Transverse colon (tissue), 4 donors: ENCODE measurements at regions of chr11 and their contacts with region 1.

Region 1: DNA sequence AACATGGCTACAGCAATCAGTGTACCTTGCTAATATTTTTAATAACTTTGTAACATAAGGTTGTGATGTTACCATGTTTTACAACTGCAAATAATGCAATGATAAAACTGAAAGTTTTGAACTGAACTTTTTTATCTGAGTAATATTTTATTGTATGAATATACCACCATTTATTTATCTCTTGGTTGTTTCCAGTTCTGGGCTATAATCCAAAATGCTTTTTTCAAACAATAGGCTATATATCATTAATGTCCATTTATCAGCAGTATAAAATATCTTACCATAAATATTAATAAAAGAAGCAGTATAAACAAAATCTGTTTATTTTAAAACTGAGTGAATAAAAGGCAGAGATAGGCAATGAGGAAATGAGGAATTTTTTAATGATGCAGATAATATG is 63.3 kb downstream of the SIK3 start:
- DNase-seq: no peak
- H3K4me3 ChIP-seq: no peak overlapping the region
- H3K27ac ChIP-seq: no peak overlapping the region
- H3K4me1 ChIP-seq: peaks cover 6 to 32% (median 13%) of the 10 kb centered on the region in 4 donors
- H3K27me3 ChIP-seq: no peaks in the 10 kb centered on the region
- CTCF ChIP-seq: no peak
- EP300 ChIP-seq: no peak
- POLR2A ChIP-seq: no peak

Region 2: GRCh38 chr11:116997071-116997470 is 37.8 kb before region 1 on chr11:
- in situ Hi-C with region 1: no loop called
- intact Hi-C with region 1: loop called (anchors 2 kb)
- DNase-seq: no peak
- H3K4me3 ChIP-seq: no peak overlapping the region
- H3K27ac ChIP-seq: no peak overlapping the region
- H3K4me1 ChIP-seq: peaks cover 0 to 23% (median 6%) of the 10 kb centered on the region in 4 donors
- H3K27me3 ChIP-seq: no peaks in the 10 kb centered on the region
- CTCF ChIP-seq: no peak
- EP300 ChIP-seq: no peak
- POLR2A ChIP-seq: no peak

Region 3: GRCh38 chr11:118238929-118239328 is 1204.0 kb after region 1 on chr11:
- in situ Hi-C with region 1: no loop called
- intact Hi-C with region 1: no loop called
- DNase-seq: no peak
- H3K4me3 ChIP-seq: no peak overlapping the region
- H3K27ac ChIP-seq: peak overlapping the region in 2 of 4 donors; percentile 21 to 67
- H3K4me1 ChIP-seq: peaks cover 0 to 33% (median 12%) of the 10 kb centered on the region in 4 donors
- H3K27me3 ChIP-seq: no peaks in the 10 kb centered on the region
- CTCF ChIP-seq: no peak
- EP300 ChIP-seq: no peak
- POLR2A ChIP-seq: no peak